Activated CD4-positive, alpha-beta memory T cell treated with anti-CD3 and anti-CD28 coated beads, Interleukin-2, amount 10 ng/mL, durations not matched to agents 7 days and 5 days (primary cell): ENCODE measurements at regions of chr18 and their contacts with region 1.

Region 1: GRCh38 chr18:23452728-23453679 is at the start of gene RIOK3:
- DNase-seq: peak; percentile 96
- H3K4me3 Mint-ChIP-seq: peak within 1 kb of the TSS; percentile 100
- H3K27ac Mint-ChIP-seq: peak within 1 kb of the TSS; percentile 84
- H3K4me1 Mint-ChIP-seq: peaks cover 53% of the 10 kb centered on the region
- H3K27me3 Mint-ChIP-seq: no peaks in the 10 kb centered on the region
- total RNA-seq, gene RIOK3: 68.3 to 74.8 TPM

Region 2: DNA sequence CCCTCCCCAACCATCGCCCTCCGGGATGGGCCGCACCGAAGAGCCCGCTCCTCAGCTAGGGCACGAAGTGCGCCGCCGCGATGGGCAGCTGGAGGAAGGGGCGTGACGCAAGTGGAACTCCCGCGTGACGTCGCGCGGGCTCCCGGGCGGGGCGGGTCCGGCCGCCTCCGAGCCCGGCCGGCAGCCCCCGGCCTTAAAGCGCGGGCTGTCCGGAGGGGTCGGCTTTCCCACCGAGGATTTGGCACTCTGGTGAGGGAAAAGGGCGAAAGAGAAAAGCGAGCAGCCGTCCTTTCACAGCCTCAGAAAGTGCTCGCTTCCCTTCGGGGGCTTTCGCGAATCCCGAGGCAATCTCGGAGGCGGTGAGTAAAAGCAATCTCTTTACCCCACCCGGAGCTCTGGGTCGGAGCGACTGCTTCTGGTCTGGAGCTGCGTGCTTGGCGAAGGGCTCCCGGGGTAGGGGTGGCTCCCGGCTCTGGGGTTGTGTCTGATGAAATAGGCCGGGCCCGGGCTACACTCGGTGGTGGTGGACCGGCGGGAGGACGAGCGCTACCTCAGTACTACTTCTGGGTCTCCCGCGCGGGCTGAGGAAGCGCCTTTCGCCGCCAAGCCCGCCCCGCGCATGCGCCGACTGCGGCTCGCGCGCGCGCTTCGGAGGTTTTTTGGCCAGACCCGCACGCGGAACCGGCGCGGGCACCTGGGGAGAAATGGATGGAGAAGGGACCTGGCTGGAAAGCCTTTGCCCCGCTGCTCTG is 519.6 kb before region 1 on chr18 and contains the start of gene RBBP8:
- CTCF ChIA-PET with region 1: interaction called, 4 read pairs
- POLR2A ChIA-PET with region 1: interaction called, 15 read pairs
- DNase-seq: peak; percentile 86
- H3K4me3 Mint-ChIP-seq: peak within 1 kb of the TSS; percentile 85
- H3K27ac Mint-ChIP-seq: peak within 1 kb of the TSS; percentile 78
- H3K4me1 Mint-ChIP-seq: peaks cover 44% of the 10 kb centered on the region
- H3K27me3 Mint-ChIP-seq: peaks cover 3% of the 10 kb centered on the region
- total RNA-seq, gene RBBP8: 55.0 to 55.9 TPM

Region 3: DNA sequence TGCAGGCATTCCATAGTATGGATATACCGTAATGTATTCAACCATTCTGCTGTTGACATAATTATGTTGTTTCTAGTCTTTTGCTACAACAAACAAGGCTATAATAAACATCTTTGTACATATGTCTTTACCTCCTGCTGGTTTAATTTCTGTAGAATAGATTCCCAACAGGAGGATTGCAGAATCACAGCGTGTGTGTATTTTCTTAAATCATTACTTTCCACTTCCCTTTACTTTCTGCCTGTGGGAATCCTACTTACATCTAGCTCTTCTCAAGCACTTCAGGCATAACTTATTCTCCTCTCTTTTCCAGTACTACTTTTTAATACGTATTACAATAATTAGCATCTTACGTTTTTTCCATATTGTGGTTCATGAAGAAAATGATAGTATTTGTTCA is 12.9 kb before region 1 on chr18:
- CTCF ChIA-PET with region 1: interaction called, 4 read pairs
- POLR2A ChIA-PET with region 1: interaction called, 12 read pairs
- DNase-seq: no peak
- H3K4me3 Mint-ChIP-seq: no peak overlapping the region
- H3K27ac Mint-ChIP-seq: no peak overlapping the region
- H3K4me1 Mint-ChIP-seq: peaks cover 23% of the 10 kb centered on the region
- H3K27me3 Mint-ChIP-seq: peaks cover 6% of the 10 kb centered on the region

Region 4: DNA sequence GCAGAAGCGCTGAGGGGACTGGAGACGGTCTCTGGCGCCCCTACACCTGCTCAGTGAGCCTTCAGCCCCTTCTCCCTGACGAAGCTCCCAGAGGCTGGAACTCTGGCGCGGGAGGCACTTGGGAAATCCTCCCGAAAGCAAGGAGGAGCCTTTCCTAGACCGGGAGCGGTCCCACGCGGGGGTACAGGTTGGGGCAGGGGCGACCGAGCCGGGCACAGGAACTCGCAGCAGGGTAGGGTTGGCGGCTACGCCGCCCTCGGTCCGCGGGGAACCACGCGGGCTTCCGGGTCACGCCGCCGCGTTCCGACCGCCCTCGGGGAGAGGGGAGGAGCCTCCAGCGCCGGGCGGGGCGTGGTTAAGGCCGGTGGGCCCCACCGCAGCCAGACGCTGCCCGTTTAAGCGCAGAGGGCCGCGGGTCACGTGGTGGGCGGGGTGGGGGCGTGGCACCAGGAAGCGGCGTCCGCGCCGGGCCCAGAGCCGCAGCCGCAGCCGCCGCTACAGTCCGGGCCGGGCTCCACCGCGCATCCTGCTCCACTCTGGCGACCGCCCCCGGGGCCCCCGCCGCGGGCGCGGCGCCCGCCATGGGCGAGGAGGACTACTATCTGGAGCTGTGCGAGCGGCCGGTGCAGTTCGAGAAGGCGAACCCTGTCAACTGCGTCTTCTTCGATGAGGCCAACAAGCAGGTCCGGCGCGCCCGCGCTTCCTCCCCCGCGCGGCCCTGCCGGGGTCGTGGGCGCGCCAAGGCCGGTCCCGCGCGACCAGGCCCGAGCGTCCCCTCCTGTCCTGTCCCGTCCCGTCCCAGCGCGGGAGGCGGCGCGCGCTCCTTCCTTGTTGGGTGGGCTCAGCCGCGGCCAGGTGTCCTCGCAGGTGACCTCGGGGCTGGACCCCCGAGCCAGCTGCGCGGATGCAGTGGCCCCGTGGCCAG is 50.3 kb after region 1 on chr18 and contains the start of gene RMC1:
- CTCF ChIA-PET with region 1: interaction called, 6 read pairs
- POLR2A ChIA-PET with region 1: interaction called, 24 read pairs
- DNase-seq: peak; percentile 97
- H3K4me3 Mint-ChIP-seq: peak within 1 kb of the TSS; percentile 86
- H3K27ac Mint-ChIP-seq: peak within 1 kb of the TSS; percentile 79
- H3K4me1 Mint-ChIP-seq: peaks cover 46% of the 10 kb centered on the region
- H3K27me3 Mint-ChIP-seq: no peaks in the 10 kb centered on the region
- total RNA-seq, gene RMC1: 54.9 to 55.9 TPM